ENCODE measurements at regions of chr22 and their contacts with region 1.

Region 1: DNA sequence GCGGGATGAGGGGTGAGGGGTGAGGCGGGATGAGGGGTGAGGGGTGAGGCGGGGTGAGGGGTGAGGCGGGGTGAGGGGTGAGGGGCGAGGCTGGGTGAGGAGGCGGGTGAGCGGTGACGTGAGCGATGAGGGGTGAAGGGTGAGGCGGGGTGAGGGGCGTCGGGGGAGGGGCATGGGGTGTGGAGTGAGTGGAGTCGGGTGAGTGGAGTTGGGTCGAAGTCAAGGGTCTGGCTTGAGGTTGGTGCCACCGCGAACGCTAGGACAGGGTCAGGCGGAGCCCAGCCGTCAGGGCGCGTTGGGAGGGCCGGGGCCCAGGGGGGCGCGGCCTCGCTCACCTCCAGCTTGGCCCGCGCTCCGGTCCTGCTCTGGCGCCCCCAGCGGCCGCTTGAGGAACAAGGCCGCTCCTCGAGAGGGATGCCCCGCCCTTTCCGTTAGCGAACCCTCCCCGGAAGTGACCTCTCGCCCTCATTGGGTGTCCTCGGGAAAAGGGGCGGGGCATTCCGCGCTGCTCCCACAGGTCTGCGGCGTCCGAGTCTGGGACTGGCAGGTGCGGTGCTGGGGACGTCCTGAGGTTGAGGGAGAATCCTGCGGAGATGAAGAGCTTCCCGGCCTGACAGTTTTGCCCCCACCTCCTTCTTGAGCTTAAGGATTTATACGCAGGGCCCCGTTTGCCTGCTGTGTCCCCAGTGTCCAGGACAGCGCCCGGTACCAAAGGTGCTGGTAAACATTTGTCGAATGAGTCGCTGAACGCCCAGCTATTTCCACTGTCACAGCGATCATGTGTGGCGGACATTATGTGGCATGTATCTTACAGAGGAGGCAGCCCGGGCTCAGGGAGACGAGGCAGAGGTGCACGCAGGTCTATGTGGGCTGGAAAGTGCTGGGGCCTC is at the start of gene SYCE3:
- DNase-seq: peak; percentile 73
- H3K4me3 ChIP-seq: peak within 1 kb of the TSS; percentile 1 to 34 (median 16)
- H3K27ac ChIP-seq: no peak within 1 kb of the TSS
- H3K4me1 ChIP-seq: peaks cover 5% of the 10 kb centered on the region
- H3K27me3 ChIP-seq: peaks cover 8 to 16% of the 10 kb centered on the region in 2 experiments
- CTCF ChIP-seq: peak; percentile 92 to 93
- POLR2A ChIP-seq: no peak
- total RNA-seq, gene SYCE3: not detected in 2 replicates

Region 2: GRCh38 chr22:50544078-50544745 is 18.6 kb before region 1 on chr22:
- CTCF ChIA-PET with region 1: interaction called, 9 read pairs
- POLR2A ChIA-PET with region 1: no interaction called
- dilution Hi-C with region 1: no loop called
- intact Hi-C with region 1: loop called (anchors 2 kb)
- DNase-seq: peak; percentile 53
- H3K4me3 ChIP-seq: no peak overlapping the region
- H3K27ac ChIP-seq: no peak overlapping the region
- H3K4me1 ChIP-seq: no peaks in the 10 kb centered on the region
- H3K27me3 ChIP-seq: peaks cover 20 to 33% of the 10 kb centered on the region in 2 experiments
- CTCF ChIP-seq: peak; percentile 49 to 81
- POLR2A ChIP-seq: no peak

Region 3: GRCh38 chr22:50576070-50576469 is 13.3 kb after region 1 on chr22:
- CTCF ChIA-PET with region 1: interaction called, 15 read pairs
- POLR2A ChIA-PET with region 1: no interaction called
- dilution Hi-C with region 1: no loop called
- intact Hi-C with region 1: no loop called
- DNase-seq: peak; percentile 68
- H3K4me3 ChIP-seq: no peak overlapping the region
- H3K27ac ChIP-seq: no peak overlapping the region
- H3K4me1 ChIP-seq: no peaks in the 10 kb centered on the region
- H3K27me3 ChIP-seq: no peaks in the 10 kb centered on the region
- CTCF ChIP-seq: peak; percentile 53 to 62
- POLR2A ChIP-seq: no peak